Ascending aorta (tissue), 2 donors: ENCODE measurements at regions of chr14 and their contacts with region 1.

Region 1: DNA sequence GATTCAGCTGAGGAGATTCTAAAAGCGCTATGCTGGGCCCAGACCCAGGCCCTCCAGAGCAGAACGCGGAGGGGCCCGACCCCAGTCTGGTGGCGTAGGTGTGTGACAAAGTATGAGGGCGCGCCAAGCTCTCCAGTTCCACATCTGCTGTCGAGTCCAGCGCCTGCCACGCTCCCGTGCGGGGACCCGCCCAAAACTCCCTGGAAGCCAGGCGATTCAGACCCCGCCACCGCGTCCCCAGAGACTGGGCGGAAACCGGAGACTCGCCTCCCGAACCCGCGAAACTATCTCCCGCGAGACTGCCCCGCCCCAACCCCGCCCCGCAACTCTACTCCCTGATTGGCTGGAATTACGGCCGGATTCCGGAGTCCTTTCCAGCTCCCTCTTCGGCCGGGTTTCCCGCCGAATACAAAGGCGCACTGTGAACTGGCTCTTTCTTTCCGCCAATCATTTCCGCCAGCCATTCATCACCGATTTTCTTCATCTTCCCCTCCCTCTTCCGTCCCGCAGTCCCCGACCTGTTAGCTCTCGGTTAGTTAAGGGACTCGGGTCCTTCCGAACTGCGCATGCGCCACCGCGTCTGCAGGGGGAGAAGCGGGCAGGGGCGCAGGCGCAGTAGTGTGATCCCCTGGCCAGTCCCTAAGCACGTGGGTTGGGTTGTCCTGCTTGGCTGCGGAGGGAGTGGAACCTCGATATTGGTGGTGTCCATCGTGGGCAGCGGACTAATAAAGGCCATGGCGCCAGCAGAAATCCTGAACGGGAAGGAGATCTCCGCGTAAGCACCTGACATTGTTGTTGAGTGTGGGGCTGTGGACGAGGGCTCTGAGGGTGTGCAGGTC is at the start of gene MTHFD1:
- DNase-seq: peak; percentile 98 to 100
- H3K4me3 ChIP-seq: peak within 1 kb of the TSS; percentile 69 to 78
- H3K27ac ChIP-seq: peak within 1 kb of the TSS; percentile 86 to 88
- H3K4me1 ChIP-seq: peaks cover 5 to 16% of the 10 kb centered on the region in 2 donors
- H3K27me3 ChIP-seq: no peaks in the 10 kb centered on the region
- CTCF ChIP-seq: no peak
- total RNA-seq, gene MTHFD1: 7.2 TPM

Region 2: GRCh38 chr14:64338616-64339316 is 49.1 kb before region 1 on chr14:
- intact Hi-C with region 1: loop called (anchors 2 kb)
- DNase-seq: peak; percentile 91 to 97
- H3K4me3 ChIP-seq: peak overlapping the region; percentile 69 to 73
- H3K27ac ChIP-seq: peak overlapping the region; percentile 68 to 73
- H3K4me1 ChIP-seq: peaks cover 0 to 2% of the 10 kb centered on the region in 2 donors
- H3K27me3 ChIP-seq: no peaks in the 10 kb centered on the region
- CTCF ChIP-seq: no peak

Region 3: GRCh38 chr14:64421166-64421565 is 33.3 kb after region 1 on chr14:
- intact Hi-C with region 1: no loop called
- DNase-seq: no peak
- H3K4me3 ChIP-seq: no peak overlapping the region
- H3K27ac ChIP-seq: no peak overlapping the region
- H3K4me1 ChIP-seq: no peaks in the 10 kb centered on the region
- H3K27me3 ChIP-seq: no peaks in the 10 kb centered on the region
- CTCF ChIP-seq: no peak

Region 4: GRCh38 chr14:64438181-64438841 is 50.4 kb after region 1 on chr14:
- intact Hi-C with region 1: no loop called
- DNase-seq: peak in 1 of 2 donors; percentile 70
- H3K4me3 ChIP-seq: no peak overlapping the region
- H3K27ac ChIP-seq: peak overlapping the region; percentile 82
- H3K4me1 ChIP-seq: peaks cover 3 to 10% of the 10 kb centered on the region in 2 donors
- H3K27me3 ChIP-seq: no peaks in the 10 kb centered on the region
- CTCF ChIP-seq: no peak

Region 5: GRCh38 chr14:64503478-64504309 is 115.8 kb after region 1 on chr14 and contains the start of gene ZBTB25:
- intact Hi-C with region 1: loop called (anchors 1 kb)
- DNase-seq: peak; percentile 86 to 96
- H3K4me3 ChIP-seq: peak within 1 kb of the TSS; percentile 91 to 94
- H3K27ac ChIP-seq: peak within 1 kb of the TSS; percentile 99
- H3K4me1 ChIP-seq: peaks cover 13 to 44% of the 10 kb centered on the region in 2 donors
- H3K27me3 ChIP-seq: no peaks in the 10 kb centered on the region
- CTCF ChIP-seq: no peak
- total RNA-seq, gene ZBTB25: 2.9 TPM

Region 6: DNA sequence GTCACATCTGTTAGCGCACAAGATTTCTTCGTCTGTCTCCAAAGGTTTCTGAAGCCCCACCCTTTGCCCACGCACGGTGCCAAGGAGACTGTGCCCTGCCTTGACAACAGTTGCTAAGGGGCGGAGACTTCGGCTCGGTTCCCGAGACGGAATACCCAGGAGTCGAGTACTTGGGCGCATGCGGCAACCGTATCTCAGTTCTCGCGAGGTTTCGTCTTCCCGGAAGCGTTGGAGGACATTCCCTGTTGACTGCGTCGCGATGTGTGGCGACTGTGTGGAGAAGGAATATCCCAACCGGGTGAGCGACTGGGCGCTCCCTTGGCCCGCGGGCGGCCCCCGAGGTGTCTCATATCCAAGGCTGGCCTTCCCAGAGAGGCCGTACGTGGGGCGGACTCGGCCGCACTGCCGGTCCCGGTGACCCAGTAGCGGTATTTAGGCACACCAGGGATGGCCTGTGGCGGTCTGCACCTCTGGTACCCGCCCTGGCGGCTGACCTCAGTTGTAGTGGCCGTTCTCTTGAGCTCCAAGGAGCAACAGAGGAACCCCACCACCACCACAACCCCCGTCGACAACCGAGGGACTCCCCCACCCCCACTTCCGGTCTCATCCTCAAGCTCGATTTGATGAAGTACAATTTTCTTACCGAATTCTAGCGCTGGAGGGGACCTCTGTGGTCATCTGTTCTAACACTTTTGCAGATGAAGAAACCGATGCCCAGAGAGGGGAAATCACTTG is 526.5 kb after region 1 on chr14 and contains the start of gene CHURC1:
- intact Hi-C with region 1: loop called (anchors 5 kb)
- DNase-seq: peak; percentile 98 to 100
- H3K4me3 ChIP-seq: peak within 1 kb of the TSS; percentile 90 to 99
- H3K27ac ChIP-seq: peak within 1 kb of the TSS; percentile 94 to 98
- H3K4me1 ChIP-seq: peaks cover 3 to 30% of the 10 kb centered on the region in 2 donors
- H3K27me3 ChIP-seq: no peaks in the 10 kb centered on the region
- CTCF ChIP-seq: no peak
- total RNA-seq, gene CHURC1: 31.9 TPM

Region 7: GRCh38 chr14:65102441-65103149 is 714.7 kb after region 1 on chr14 and contains the start of gene MAX:
- intact Hi-C with region 1: loop called (anchors 5 kb)
- DNase-seq: peak; percentile 97 to 99
- H3K4me3 ChIP-seq: peak within 1 kb of the TSS; percentile 89 to 93
- H3K27ac ChIP-seq: peak within 1 kb of the TSS; percentile 81 to 88
- H3K4me1 ChIP-seq: peaks cover 6 to 32% of the 10 kb centered on the region in 2 donors
- H3K27me3 ChIP-seq: no peaks in the 10 kb centered on the region
- CTCF ChIP-seq: no peak
- total RNA-seq, gene MAX: 26.8 TPM